HAP-1 (cell line): ENCODE measurements at regions of chr18 and their contacts with region 1.

Region 1: DNA sequence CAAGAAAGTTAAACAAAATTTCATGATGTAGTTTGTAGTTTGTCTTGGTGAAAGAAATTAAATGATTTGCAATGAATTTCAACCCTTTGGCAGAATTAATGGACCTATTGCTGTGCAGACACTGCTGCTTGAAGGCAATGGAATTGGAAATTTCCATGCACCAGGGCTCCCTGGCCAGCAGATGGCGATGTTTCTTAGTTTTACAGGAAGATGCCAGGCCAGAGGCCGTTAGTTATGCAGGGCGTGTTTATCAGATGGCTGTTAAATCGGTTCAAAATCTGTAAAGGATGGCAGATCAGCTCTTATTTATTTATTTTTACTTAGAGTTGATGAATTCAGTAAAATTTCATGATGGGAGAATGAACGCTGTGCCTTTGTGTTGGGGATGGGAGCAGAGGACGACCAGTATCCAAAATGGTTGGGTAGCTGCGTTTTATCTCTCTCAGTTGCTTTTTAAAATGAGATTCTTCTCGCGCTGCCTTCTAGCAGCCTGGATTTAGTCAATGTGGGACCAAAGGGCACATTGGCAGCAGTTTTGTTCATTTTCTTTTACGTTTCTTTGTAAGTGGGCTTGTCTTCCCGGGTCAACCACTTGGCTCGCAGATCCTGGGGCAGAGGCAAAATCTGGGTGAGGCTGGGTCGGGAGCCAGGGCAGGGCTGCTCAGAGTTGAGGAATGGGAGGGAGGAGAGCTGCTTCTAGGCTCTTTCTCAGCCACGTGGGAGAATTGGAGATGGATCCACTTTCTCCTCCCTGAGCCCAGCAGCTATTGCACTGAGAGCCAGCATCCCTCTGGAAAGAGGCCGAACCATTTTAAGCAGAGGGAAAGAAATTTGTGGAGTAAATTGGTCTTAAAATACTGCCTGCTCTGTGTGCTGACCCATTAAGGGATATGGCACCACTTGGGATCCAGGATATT is 344.0 kb downstream of the PIK3C3 start:
- DNase-seq: peak; percentile 78 to 86
- H3K4me3 ChIP-seq: no peak overlapping the region
- H3K4me1 ChIP-seq: peaks cover 3% of the 10 kb centered on the region; the same call in 1 of the 2 replicates
- H3K27me3 ChIP-seq: no peaks in the 10 kb centered on the region

Region 2: GRCh38 chr18:42480441-42480840 is 181.4 kb after region 1 on chr18:
- in situ Hi-C with region 1: no loop called
- DNase-seq: no peak
- H3K4me3 ChIP-seq: no peak overlapping the region
- H3K4me1 ChIP-seq: peaks cover 3% of the 10 kb centered on the region
- H3K27me3 ChIP-seq: no peaks in the 10 kb centered on the region

Region 3: GRCh38 chr18:42586601-42587000 is 287.6 kb after region 1 on chr18:
- in situ Hi-C with region 1: loop called (anchors 10 kb)
- DNase-seq: peak; percentile 40 to 51
- H3K4me3 ChIP-seq: no peak overlapping the region
- H3K4me1 ChIP-seq: peaks cover 31% of the 10 kb centered on the region
- H3K27me3 ChIP-seq: no peaks in the 10 kb centered on the region

Region 4: DNA sequence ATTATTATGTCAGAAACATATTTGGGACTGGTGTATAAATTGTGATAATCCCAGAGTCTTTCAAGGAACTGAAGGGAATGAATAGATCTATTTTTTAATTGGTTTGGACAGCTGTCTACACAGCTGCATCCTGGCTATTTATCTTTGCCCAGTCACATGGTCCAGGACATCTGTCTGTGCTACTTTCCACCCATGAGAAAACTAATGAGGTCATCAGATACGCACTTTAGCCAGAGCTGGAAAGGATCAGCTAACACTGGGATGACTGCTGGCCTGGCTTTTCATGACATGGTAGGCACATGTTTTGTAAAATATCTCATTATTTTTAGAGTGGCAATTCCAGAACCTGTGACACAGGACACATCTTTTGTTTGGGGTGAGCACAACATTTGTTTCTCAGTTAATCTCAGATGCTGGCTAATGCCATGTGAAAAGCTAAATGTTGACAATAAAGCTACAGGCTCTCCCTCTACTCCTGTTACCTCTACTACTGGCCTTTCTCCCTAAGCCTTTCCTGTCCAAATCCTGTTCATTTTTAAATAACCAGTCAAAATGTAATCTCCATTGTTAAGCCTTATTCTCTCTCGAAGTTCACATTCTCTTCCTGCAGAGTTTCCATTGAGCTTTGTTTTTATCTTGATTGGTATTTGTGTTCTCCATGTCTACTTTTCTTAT is 315.7 kb after region 1 on chr18:
- in situ Hi-C with region 1: no loop called
- DNase-seq: peak in 1 of 2 experiments; percentile 32
- H3K4me3 ChIP-seq: no peak overlapping the region
- H3K4me1 ChIP-seq: peaks cover 13% of the 10 kb centered on the region
- H3K27me3 ChIP-seq: no peaks in the 10 kb centered on the region

Region 5: GRCh38 chr18:43571078-43571689 is 1272.2 kb after region 1 on chr18:
- in situ Hi-C with region 1: loop called (anchors 25 kb)
- DNase-seq: peak; percentile 37 to 58
- H3K4me3 ChIP-seq: no peak overlapping the region
- H3K4me1 ChIP-seq: no peaks in the 10 kb centered on the region
- H3K27me3 ChIP-seq: no peaks in the 10 kb centered on the region